GM23248 (cell line): ENCODE measurements at regions of chrX and their contacts with region 1.

Region 1: GRCh38 chrX:51743179-51743957 is at the start of gene GSPT2:
- DNase-seq: peak; percentile 76
- H3K4me3 ChIP-seq: peak within 1 kb of the TSS; percentile 92
- H3K27ac ChIP-seq: peak within 1 kb of the TSS; percentile 62
- H3K4me1 ChIP-seq: 0 out of 2 replicates have a peak, but pooled peaks cover 5% of the 10 kb centered on the region
- H3K27me3 ChIP-seq: no peaks in the 10 kb centered on the region
- total RNA-seq, gene GSPT2: 5.2 and 7.8 TPM in 2 replicates

Region 2: GRCh38 chrX:51899771-51900170 is 156.4 kb after region 1 on chrX:
- in situ Hi-C with region 1: loop called (anchors 25 kb)
- DNase-seq: peak; percentile 18
- H3K4me3 ChIP-seq: no peak overlapping the region
- H3K27ac ChIP-seq: no peak overlapping the region
- H3K4me1 ChIP-seq: peaks cover 4% of the 10 kb centered on the region; the same call in 1 of the 2 replicates
- H3K27me3 ChIP-seq: no peaks in the 10 kb centered on the region